A549 (cell line): ENCODE measurements at regions of chr14 and their contacts with region 1.

Region 1: DNA sequence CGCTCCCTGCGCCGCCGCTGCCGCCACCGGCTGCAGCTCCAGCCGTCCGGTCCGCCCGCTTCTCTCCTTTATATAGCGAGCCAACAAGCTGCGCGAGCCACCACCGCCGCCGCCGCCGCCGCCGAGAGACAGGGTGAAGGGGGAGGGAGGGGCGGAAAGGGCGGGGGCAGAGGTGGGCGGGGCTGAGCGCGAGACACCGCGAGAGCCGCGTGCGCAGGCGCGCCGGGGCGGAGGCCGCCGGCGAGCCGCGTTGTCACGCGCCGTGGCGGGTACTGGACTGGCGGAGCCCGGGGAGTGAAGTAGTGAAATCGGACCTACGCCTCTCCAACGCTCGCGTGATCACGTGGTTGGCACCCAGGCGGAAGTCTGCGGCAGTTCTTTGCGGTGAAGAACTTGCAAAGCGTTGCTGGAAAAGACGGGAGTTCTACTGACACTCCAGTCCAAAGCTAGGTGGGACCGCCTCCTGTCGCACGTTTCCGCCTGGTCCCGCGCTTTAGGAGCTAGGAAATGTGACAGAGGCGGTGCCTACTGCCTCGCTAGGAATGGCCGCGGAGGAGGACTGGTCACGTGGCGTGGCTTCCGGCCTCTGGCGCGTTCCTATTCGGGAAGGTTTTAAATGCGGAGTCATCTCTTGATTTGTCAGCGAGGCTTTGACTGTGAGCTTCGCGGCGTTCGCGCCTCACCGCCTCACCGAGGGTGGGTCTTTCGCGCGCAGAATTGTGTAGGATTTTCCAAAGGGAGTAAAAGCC is at the start of gene GTF2A1:
- DNase-seq: peak; percentile 80 to 96
- ATAC-seq: peak; percentile 82 to 88
- H3K4me3 ChIP-seq: peak within 1 kb of the TSS; percentile 89
- H3K27ac ChIP-seq: peak within 1 kb of the TSS; percentile 96
- H3K4me1 ChIP-seq: peaks cover 24% of the 10 kb centered on the region
- CTCF ChIP-seq: no peak
- EP300 ChIP-seq: no peak
- POLR2A ChIP-seq: peak; percentile 99
- RAD21 ChIP-seq: no peak
- polyA plus RNA-seq, gene GTF2A1: 19.6 and 22.4 TPM in 2 replicates

Region 2: GRCh38 chr14:81170104-81170828 is 50.7 kb before region 1 on chr14:
- CTCF ChIA-PET with region 1: interaction called, 3 read pairs
- POLR2A ChIA-PET with region 1: interaction called, 19 read pairs
- DNase-seq: peak; percentile 89 to 91
- ATAC-seq: peak; percentile 100
- H3K4me3 ChIP-seq: peak overlapping the region; percentile 62
- H3K27ac ChIP-seq: peak overlapping the region; percentile 82 to 92
- H3K4me1 ChIP-seq: 0 out of 3 replicates have a peak, but pooled peaks cover 2% of the 10 kb centered on the region
- CTCF ChIP-seq: peak; percentile 89
- EP300 ChIP-seq: no peak
- POLR2A ChIP-seq: peak; percentile 94
- RAD21 ChIP-seq: peak; percentile 67 to 72

Region 3: DNA sequence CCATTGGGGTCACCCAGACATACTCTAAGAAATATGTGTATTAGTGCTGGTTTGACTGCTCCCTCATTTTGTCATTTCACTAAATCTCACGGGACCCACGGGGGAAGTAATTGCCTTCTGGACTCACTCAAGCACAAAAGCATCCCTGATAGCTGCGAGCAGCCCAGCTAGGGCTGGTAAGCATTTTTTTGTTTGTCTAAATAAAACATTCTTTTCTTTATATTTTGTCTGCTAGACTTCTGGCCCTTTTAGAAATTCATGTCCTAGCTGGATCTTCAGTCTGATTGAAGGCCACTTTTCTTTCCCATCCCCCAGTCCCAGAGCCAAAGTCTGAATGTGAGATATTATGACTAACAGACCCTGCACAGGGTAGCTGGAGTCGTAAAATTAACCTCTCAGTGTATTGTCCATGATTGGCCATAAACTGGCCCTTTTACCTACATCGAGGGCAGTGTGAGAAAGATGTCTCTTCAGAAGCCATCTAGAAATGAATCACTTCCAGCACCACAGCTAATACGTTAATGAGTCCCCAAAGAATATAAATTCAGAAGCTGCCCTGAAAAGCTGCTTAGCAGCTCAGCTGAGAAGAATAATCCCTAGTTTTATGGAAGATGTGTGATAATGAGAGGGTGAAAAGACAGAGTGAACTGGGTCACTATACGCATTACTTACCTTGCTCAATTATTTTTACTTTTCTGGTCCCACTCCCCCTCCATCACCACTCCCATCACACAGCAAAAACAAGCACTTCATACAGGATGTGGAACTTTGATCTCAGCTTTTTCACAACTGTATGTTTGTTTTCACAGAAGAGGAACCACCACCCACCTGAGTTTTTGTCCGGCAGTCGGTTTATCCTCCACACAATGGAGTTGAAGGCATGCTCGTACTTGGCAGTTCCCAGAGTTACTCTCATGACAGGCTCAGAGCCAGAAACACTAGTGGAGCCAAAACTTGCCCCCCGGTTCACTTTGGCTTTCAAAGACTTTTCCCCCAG is 55.4 kb after region 1 on chr14:
- CTCF ChIA-PET with region 1: no interaction called
- POLR2A ChIA-PET with region 1: no interaction called
- DNase-seq: no peak
- ATAC-seq: no peak
- H3K4me3 ChIP-seq: no peak overlapping the region
- H3K27ac ChIP-seq: no peak overlapping the region
- H3K4me1 ChIP-seq: no peaks in the 10 kb centered on the region
- CTCF ChIP-seq: no peak
- EP300 ChIP-seq: no peak
- POLR2A ChIP-seq: no peak
- RAD21 ChIP-seq: no peak

Region 4: DNA sequence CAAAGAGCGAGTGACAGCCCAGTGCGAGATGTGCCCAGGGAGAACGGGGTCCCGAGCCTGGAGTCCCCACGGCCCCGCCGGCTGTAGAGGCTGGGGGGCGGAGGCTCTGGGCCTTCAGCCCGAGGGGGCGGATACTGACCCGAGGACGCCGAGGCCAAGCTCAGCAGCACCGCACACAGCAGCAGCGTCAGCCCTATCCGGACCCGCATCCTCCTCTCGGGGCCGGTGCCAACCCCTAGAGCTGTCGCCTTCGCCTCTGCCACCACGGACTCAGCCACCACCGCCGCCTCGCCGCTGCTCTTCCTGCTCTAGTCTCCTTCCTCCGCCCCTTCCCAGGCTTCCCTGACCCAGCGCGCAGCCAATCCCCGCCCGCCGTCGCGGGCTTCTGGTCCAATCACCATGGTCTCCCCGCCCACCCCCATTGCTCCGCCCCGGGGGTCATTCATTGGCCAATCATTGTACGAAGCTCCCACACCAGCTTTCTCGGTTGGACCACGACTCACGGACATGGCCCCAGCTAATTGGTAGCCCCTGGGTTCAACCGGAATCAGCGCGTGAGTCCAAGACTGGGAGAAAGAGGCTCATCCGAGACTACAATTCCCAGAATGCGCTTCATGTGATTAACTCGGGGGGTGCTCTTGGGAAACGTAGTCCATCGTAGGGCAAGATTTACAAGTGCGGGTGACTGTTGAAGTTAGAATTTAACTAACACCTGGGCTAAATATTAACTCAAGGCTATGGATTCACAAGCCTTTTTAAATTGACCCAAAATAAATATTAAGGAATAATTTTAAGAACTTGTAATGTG is 312.7 kb after region 1 on chr14 and contains the start of gene SEL1L:
- CTCF ChIA-PET with region 1: no interaction called
- POLR2A ChIA-PET with region 1: interaction called, 21 read pairs
- DNase-seq: peak; percentile 97 to 99
- ATAC-seq: peak; percentile 99
- H3K4me3 ChIP-seq: peak within 1 kb of the TSS; percentile 63
- H3K27ac ChIP-seq: peak within 1 kb of the TSS; percentile 74 to 92
- H3K4me1 ChIP-seq: peaks cover 32% of the 10 kb centered on the region; the same call in 2 of the 3 replicates
- CTCF ChIP-seq: no peak
- EP300 ChIP-seq: no peak
- POLR2A ChIP-seq: peak; percentile 86
- RAD21 ChIP-seq: no peak
- polyA plus RNA-seq, gene SEL1L: 43.2 and 54.2 TPM in 2 replicates